ENCODE measurements at regions of chr7 and their contacts with region 1.

Region 1: GRCh38 chr7:116862234-116862950 is at the start of gene CAPZA2:
- DNase-seq: peak; percentile 92
- H3K4me3 Mint-ChIP-seq: peak within 1 kb of the TSS; percentile 96
- H3K27ac Mint-ChIP-seq: peak within 1 kb of the TSS; percentile 98
- H3K4me1 Mint-ChIP-seq: peaks cover 30% of the 10 kb centered on the region
- H3K27me3 Mint-ChIP-seq: peaks cover 20% of the 10 kb centered on the region
- total RNA-seq, gene CAPZA2: 128 and 147 TPM in 2 replicates

Region 2: DNA sequence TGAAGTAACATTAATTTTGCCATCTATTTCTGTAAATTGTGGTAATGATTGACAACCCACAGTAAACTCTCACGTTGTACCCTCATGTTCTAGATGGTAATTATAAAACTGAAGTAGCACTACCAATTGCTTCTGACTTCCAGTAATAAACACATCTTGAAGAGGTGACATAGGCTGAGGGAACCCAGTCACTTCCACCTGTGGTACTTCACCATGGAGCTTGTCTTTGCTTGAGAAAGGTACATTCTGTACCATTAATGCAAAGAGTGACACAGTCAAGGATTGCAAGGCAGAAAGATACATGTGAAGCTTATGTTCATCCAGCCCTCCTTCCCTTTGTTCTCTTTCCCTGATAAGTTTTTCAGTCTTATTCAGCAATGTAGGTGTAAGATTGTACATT is 11.2 kb after region 1 on chr7:
- intact Hi-C with region 1: loop called (anchors 1 kb)
- DNase-seq: no peak
- H3K4me3 Mint-ChIP-seq: no peak overlapping the region
- H3K27ac Mint-ChIP-seq: no peak overlapping the region
- H3K4me1 Mint-ChIP-seq: peaks cover 44% of the 10 kb centered on the region
- H3K27me3 Mint-ChIP-seq: no peaks in the 10 kb centered on the region

Region 3: DNA sequence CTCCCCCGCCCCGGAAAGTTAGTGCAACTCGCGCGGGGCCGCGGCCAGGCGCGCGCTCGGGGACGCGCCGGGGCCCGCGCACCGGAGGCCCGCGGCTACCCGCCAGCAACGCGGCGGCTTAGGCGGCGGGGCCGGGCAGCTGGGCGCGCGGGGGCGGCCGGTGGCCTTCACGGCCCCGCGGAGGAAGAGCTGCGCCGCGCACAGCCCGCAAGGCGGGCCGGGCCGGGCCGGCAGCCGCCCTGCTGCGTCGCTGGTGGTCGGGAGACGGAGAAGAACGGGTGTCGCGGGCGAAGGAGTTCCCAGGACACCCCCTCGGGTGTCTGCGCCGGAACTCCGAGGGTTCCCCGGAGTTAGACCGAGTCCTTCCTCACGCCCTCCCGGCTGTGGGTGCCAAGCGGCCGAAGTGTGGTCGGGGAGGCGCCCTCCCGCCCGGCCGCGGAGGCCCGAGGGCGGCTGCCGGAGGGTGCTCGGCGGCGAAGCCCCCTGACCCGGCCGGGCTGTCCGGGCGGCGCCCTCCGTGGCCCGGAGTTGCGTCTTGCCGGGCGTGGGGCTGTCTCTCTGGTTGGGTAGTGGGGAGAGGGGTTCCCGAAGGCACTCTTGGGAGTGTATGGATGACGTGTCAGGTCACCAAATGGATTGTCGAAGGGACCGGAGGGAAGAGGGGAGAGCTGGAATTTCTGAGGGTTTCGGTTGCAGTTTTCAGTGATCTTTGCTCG is 91.5 kb after region 1 on chr7:
- intact Hi-C with region 1: loop called (anchors 2 kb)
- DNase-seq: no peak
- H3K4me3 Mint-ChIP-seq: peak overlapping the region; percentile 94
- H3K27ac Mint-ChIP-seq: peak overlapping the region; percentile 89
- H3K4me1 Mint-ChIP-seq: peaks cover 31% of the 10 kb centered on the region
- H3K27me3 Mint-ChIP-seq: peaks cover 8% of the 10 kb centered on the region

Region 4: GRCh38 chr7:117014673-117015133 is 152.3 kb after region 1 on chr7:
- intact Hi-C with region 1: loop called (anchors 5 kb)
- DNase-seq: no peak
- H3K4me3 Mint-ChIP-seq: no peak overlapping the region
- H3K27ac Mint-ChIP-seq: no peak overlapping the region
- H3K4me1 Mint-ChIP-seq: peaks cover 53% of the 10 kb centered on the region
- H3K27me3 Mint-ChIP-seq: peaks cover 7% of the 10 kb centered on the region

Region 5: DNA sequence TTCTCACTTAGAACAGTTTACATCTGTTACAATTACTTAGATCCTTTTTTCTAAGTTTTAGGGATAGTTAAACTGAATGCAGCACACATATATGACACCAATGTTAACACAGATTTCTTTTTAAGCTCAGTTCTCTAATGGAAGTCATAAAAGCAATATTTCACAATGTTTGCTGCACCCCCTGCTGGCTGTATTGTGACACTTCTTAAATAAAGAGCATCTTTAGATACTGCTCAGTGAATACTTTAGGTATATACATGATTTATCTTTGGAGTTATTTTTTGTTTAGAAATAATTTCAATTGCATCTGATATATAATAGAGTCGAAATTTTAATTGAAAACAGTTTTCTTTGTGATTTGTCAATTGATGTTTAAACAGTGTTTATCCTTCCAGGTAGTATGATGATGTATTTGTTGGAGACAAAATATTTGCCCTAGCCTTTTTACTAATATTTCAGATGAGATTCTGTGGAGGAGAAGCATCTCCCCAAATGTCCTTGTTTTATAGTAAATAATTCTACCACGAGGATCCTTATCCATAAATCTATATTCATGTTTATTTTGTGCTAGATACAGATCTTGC is 265.3 kb after region 1 on chr7:
- intact Hi-C with region 1: loop called (anchors 2 kb)
- DNase-seq: no peak
- H3K4me3 Mint-ChIP-seq: no peak overlapping the region
- H3K27ac Mint-ChIP-seq: no peak overlapping the region
- H3K4me1 Mint-ChIP-seq: peaks cover 22% of the 10 kb centered on the region
- H3K27me3 Mint-ChIP-seq: peaks cover 2% of the 10 kb centered on the region

Measured in activated T-helper 2 cell treated with anti-CD3 and anti-CD28 coated beads, Interferon-gamma antibody, Interleukin-2, Interleukin-4, amounts not matched to agents 10 μg/mL and 5 μg/mL and 100 μg/mL, durations not matched to agents 14 hours and 24 hours and 36 hours (primary cell).